PC-9 (cell line): ENCODE measurements at regions of chr2 and their contacts with region 1.

Region 1: DNA sequence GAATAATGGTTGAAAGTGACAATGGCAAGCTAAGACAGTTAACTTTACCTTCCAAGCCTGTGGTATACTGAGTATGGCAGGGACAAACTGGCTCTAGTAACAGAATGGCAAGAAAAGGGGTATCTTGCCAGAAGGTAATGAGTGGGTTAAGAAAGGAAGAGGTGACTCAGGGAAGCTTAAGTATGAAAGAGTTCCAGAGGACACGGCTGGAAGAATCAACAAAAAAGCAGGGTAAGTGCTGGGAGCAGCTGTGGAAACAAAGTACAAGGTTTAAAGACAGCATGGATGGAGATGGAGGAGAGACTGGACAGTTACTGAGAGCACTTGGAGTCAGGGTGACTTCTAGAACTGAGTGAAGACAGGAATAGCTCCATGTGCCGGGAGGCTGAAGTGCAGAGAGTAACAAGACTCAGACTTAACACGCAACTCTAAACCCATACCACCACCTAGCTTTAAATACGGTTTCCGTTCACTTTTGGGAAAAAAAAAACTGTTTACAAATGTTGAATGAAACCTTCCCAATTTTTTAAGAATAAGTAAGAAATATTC is 69.0 kb downstream of the REV1 start:
- DNase-seq: no peak
- H3K4me3 ChIP-seq: no peak overlapping the region
- H3K27ac ChIP-seq: no peak overlapping the region; the same call in 1 of the 2 replicates
- H3K4me1 ChIP-seq: no peaks in the 10 kb centered on the region
- H3K27me3 ChIP-seq: no peaks in the 10 kb centered on the region
- CTCF ChIP-seq: no peak

Region 2: DNA sequence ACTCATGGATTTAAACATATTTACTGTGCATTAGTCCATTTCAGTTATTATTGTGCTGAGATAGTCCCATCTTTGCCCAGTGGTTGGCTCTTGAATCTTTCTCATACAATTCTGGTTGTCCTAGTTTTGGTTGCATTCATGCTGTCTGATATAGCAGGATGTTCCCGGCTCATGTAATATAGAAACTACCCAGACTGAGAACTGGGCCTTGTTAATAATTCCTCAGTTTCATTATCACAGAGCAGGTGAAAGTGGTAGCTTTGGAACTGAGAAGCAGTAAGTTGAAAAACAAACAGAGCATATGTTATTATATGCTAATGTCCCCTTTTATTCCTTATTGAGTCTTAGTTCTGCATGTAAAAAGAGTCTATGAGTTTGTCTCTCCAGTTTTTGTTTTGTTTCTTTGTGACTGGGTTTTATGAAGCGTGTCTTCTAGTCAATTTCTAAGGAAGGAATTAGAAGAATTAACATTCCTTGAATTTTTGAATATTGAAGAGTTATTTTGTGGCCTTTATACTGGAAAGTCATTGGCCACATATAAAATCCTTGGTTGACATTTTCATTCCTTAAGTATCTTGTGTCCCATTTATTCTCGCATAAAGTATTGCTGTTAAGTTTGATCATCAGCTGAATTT is 40.3 kb before region 1 on chr2:
- CTCF ChIA-PET with region 1: no interaction called
- POLR2A ChIA-PET with region 1: no interaction called
- intact Hi-C with region 1: loop called (anchors 5 kb)
- DNase-seq: no peak
- H3K4me3 ChIP-seq: no peak overlapping the region
- H3K27ac ChIP-seq: no peak overlapping the region
- H3K4me1 ChIP-seq: no peaks in the 10 kb centered on the region
- H3K27me3 ChIP-seq: no peaks in the 10 kb centered on the region
- CTCF ChIP-seq: no peak

Region 3: DNA sequence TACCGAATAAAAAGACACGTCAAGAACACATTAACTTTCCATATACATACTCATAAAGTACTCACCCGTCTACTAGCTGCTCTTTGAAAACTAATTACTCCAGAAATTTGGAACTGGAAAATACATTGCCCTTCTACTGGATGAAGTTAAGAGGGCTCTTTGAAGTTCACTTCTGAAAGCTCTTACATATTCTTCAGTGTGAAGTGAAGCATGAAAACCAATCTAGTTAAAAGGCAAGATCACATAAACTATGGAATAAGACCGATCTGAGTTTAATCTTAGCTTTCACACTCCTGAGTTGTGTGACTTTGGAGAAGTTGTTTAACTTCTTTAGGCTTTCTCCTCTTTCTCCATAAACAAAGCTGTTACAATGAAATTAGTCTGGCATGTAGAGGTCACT is 30.5 kb after region 1 on chr2:
- CTCF ChIA-PET with region 1: no interaction called
- POLR2A ChIA-PET with region 1: no interaction called
- intact Hi-C with region 1: no loop called
- DNase-seq: no peak
- H3K4me3 ChIP-seq: no peak overlapping the region
- H3K27ac ChIP-seq: no peak overlapping the region
- H3K4me1 ChIP-seq: no peaks in the 10 kb centered on the region
- H3K27me3 ChIP-seq: no peaks in the 10 kb centered on the region
- CTCF ChIP-seq: no peak

Region 4: DNA sequence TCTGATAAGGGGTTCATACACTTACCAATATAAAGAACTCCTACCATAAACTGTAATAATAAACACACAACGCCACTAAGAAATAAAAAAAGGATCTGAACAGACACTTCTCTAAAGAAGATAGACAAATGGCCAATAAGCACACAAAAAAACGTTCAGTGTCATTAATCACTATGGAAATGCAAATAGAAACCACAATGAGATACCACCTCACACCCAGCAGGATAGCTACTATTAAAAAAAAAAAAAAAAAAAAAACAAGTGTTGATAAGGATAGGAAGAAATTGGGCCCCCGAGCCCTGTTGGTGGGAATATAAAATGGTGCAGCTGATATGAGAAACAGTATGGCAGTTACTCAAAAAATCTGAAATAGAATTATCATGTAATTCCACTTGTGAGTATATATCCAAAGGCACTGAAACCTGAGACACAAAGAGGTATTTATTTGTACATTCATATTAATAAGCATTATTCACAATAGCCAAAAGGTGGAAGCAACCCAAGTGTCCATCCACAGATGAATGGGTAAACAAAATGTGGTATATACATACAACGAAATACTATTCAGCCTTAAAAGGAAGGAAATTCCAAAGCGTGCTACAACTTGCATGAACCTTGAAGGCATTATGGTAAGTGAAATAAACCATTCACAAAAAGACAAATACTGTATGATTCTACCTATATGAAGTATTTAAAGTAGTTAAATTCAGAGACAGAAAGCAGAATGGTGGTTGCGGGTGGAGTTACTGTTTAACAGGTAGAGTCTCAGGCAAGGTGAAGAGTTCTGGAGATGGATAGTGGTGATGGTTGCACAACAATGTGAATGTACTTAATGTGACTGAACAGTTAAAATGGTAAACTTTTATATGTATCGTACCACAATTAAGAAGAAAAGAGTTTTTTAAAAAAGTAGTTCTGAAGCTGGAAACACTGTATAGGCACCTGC is 51.1 kb after region 1 on chr2:
- CTCF ChIA-PET with region 1: no interaction called
- POLR2A ChIA-PET with region 1: no interaction called
- intact Hi-C with region 1: loop called (anchors 5 kb)
- DNase-seq: no peak
- H3K4me3 ChIP-seq: no peak overlapping the region
- H3K27ac ChIP-seq: no peak overlapping the region
- H3K4me1 ChIP-seq: peaks cover 8% of the 10 kb centered on the region; the same call in 1 of the 2 replicates
- H3K27me3 ChIP-seq: no peaks in the 10 kb centered on the region
- CTCF ChIP-seq: no peak

Region 5: DNA sequence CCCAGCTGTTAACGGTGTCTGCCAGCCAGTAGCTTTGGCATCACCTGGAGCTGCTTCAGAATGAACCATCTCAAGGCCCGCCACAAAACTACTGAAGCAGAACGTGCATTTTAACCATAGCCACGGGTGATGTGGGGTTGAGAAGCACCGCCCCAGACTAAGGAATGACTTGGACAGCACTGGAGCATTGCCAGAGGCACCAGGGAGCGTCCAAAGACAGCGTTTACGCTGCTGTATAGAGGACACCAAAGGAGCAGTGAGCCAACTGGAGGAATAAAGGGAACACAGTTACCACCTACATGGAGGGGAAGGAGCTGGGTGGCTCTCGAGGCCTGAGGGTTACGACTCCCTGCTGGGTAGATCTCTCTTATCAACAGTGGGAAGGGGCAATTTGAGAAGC is 929.9 kb after region 1 on chr2:
- CTCF ChIA-PET with region 1: no interaction called
- POLR2A ChIA-PET with region 1: no interaction called
- intact Hi-C with region 1: no loop called
- DNase-seq: peak in 1 of 2 experiments; percentile 5
- H3K4me3 ChIP-seq: no peak overlapping the region
- H3K27ac ChIP-seq: no peak overlapping the region
- H3K4me1 ChIP-seq: no peaks in the 10 kb centered on the region
- H3K27me3 ChIP-seq: peaks cover 24% of the 10 kb centered on the region
- CTCF ChIP-seq: no peak